Activated CD4-positive, alpha-beta memory T cell treated with anti-CD3 and anti-CD28 coated beads for 36 hours (primary cell): ENCODE measurements at regions of chrX and their contacts with region 1.

Region 1: DNA sequence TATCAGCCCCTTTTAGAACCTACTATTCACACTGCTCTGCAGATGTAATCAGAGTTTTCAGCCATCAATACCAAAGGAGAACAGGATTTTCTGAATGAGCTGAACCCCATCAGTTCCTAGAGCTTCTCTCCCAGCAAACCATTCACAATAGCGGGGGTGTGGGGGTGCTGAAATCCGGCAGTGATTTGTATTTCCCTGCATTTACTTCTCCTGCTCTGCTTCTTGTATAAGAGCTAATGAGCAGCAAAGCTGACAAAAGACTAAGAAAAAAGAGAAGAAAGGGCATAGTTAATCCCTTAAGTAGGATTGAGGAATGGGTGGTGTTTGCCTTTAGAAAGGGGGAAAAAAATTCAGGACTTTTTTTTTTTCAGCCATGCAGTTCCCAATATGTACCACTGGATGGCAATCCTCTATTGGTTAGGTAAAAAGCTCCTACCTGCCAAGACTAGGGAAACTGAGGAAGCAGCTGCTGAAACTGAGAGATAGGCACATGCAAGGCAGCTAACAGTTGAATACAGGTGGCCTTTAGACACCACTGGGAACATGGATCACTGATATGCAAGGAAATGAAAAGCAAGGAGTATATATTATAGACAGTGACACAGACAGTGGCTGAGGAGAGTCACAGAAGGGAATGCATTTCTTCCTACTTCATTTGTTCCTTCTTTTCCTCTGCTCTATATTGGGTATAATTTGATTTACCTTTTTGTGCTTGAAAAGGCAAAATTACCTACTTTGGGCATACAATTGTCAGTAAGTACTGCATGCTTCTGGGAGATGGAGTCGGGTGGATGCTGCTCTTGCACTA is 217.9 kb downstream of the HS6ST2 start:
- DNase-seq: no peak
- H3K4me3 Mint-ChIP-seq: no peak overlapping the region
- H3K27ac Mint-ChIP-seq: no peak overlapping the region
- H3K4me1 Mint-ChIP-seq: peaks cover 24% of the 10 kb centered on the region
- H3K27me3 Mint-ChIP-seq: no peaks in the 10 kb centered on the region

Region 2: GRCh38 chrX:132676561-132677186 is 63.8 kb before region 1 on chrX:
- CTCF ChIA-PET with region 1: no interaction called
- POLR2A ChIA-PET with region 1: no interaction called
- intact Hi-C with region 1: loop called (anchors 2 kb)
- DNase-seq: no peak
- H3K4me3 Mint-ChIP-seq: no peak overlapping the region
- H3K27ac Mint-ChIP-seq: no peak overlapping the region
- H3K4me1 Mint-ChIP-seq: peaks cover 8% of the 10 kb centered on the region
- H3K27me3 Mint-ChIP-seq: no peaks in the 10 kb centered on the region

Region 3: DNA sequence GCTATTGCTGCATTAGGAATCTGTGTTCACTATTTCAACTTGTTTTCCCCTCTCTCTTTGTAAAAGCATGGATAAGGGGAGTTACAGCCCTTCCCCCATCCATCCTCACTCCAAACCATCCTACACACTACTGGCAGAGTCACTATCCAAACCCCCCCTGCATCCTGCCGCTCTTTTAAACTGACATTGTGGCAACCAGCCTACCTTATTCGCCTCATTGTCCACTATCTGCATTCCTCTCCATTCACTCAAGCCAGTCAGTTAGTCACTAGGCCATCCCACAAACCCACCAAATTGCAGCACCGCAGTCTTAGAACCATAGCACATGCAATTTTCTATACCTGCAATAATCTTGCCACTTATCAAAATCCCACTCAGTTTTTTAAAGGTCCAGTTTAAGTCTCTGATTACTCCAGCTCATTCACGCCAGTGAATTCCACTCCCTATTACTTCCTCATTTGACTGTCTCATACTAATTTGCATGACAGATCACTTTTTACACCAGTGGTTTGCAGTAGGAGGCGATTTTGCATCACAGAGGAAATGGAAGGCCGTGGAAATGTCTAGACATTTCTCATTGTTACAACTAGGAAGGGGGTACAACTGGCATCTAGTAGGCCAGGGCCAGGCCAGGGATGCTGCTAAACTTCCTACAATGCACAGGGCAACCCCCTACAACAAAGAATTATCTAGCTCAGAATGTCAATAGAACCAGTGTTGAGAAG is 36.1 kb after region 1 on chrX:
- CTCF ChIA-PET with region 1: interaction called, 5 read pairs
- POLR2A ChIA-PET with region 1: interaction called, 10 read pairs
- intact Hi-C with region 1: no loop called
- DNase-seq: peak; percentile 8
- H3K4me3 Mint-ChIP-seq: no peak overlapping the region
- H3K27ac Mint-ChIP-seq: no peak overlapping the region
- H3K4me1 Mint-ChIP-seq: peaks cover 24% of the 10 kb centered on the region
- H3K27me3 Mint-ChIP-seq: no peaks in the 10 kb centered on the region

Region 4: DNA sequence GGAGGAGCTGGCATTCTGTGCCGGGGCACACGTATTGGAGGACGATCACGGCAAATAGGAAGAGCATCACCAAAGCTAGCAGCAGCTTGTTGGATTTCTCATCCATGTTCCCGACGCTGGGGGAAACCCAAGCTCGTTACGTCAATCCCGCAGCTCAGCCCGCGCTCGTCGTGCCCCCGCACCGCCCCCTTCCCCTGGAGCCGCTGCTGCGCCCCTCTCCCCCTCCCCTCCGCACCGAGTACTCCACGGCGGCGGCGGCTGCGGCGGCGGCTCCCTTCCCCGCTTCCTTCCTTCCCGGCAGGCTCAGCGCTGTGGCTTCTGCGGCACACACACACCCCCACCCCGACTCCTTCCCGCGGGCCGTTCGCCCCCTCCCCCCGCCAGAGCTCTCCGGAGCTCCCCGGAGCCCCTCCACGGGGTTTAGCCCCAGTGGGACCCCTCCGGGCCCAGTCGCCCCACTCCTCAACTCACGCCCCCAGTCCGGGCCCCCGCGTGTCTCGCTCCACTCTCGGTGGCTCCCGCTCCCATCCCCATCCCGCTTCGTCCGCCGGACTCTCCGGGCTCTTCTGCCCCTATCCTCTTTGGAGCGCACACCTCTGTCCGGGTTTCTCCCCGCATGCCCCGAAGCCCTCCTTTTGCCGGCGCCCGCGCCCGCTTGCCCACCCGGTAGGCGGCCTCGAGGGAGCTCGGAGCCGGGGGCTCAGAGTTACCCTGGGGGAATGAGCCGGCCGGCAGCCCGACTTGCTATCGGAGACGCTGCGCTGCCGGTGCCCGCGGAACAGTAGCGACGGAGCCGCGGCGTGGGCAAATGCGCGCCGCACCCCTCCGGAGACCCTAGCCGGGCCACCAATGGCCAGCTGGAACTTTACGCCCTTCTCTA is 216.9 kb after region 1 on chrX:
- CTCF ChIA-PET with region 1: no interaction called
- POLR2A ChIA-PET with region 1: no interaction called
- intact Hi-C with region 1: loop called (anchors 10 kb)
- DNase-seq: peak; percentile 26
- H3K4me3 Mint-ChIP-seq: peak overlapping the region; percentile 55
- H3K27ac Mint-ChIP-seq: no peak overlapping the region
- H3K4me1 Mint-ChIP-seq: peaks cover 6% of the 10 kb centered on the region
- H3K27me3 Mint-ChIP-seq: peaks cover 35% of the 10 kb centered on the region